ENCODE measurements at regions of chr5 and their contacts with region 1.

Region 1: GRCh38 chr5:81292130-81292529 is 9.3 kb upstream of the ZCCHC9 start:
- DNase-seq: no peak
- ATAC-seq: no peak

Region 2: DNA sequence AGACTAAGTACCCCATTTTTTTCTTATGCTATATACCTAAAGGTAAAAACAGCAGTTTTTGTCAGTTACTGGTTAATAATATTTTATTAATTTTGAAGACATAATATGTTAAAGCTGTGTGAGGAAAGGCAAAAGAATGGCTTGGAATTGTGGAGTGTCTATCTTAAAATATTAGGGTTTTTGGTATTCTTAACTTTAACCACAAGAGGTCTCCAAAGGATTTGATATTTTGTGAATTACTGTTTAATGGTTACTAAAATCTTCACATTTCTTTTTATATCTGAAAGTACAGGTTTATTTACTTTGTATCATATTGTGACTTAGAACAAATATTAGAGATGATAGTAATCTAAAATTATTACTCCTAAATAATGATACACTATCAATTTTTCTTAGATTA is 605.4 kb before region 1 on chr5:
- intact Hi-C with region 1: loop called in 1 of 2 experiments (anchors 10 kb)
- DNase-seq: no peak
- ATAC-seq: no peak

Measured in left cardiac atrium (tissue), 4 donors.